Uterus (tissue), 4 donors: ENCODE measurements at regions of chr1 and their contacts with region 1.

Region 1: GRCh38 chr1:39189592-39190041 is 14.9 kb upstream of the MACF1 start:
- DNase-seq: no peak
- H3K4me3 ChIP-seq: no peak overlapping the region
- H3K27ac ChIP-seq: peak overlapping the region; percentile 25 to 45
- H3K4me1 ChIP-seq: peaks cover 0 to 3% of the 10 kb centered on the region in 2 donors
- H3K27me3 ChIP-seq: no peaks in the 10 kb centered on the region
- CTCF ChIP-seq: no peak
- POLR2A ChIP-seq: no peak

Region 2: GRCh38 chr1:38953433-38953860 is 236.2 kb before region 1 on chr1:
- intact Hi-C with region 1: no loop called
- DNase-seq: no peak
- H3K4me3 ChIP-seq: no peak overlapping the region
- H3K27ac ChIP-seq: no peak overlapping the region
- H3K4me1 ChIP-seq: no peaks in the 10 kb centered on the region
- H3K27me3 ChIP-seq: no peaks in the 10 kb centered on the region
- CTCF ChIP-seq: no peak
- POLR2A ChIP-seq: no peak

Region 3: GRCh38 chr1:39105061-39105840 is 84.4 kb before region 1 on chr1:
- intact Hi-C with region 1: loop called (anchors 5 kb)
- DNase-seq: peak; percentile 71 to 74
- H3K4me3 ChIP-seq: peak overlapping the region; percentile 54 to 80
- H3K27ac ChIP-seq: peak overlapping the region; percentile 94 to 95
- H3K4me1 ChIP-seq: peaks cover 8 to 9% of the 10 kb centered on the region in 2 donors
- H3K27me3 ChIP-seq: no peaks in the 10 kb centered on the region
- CTCF ChIP-seq: peak in 1 of 4 experiments; percentile 2
- POLR2A ChIP-seq: peak; percentile 20 to 81

Region 4: DNA sequence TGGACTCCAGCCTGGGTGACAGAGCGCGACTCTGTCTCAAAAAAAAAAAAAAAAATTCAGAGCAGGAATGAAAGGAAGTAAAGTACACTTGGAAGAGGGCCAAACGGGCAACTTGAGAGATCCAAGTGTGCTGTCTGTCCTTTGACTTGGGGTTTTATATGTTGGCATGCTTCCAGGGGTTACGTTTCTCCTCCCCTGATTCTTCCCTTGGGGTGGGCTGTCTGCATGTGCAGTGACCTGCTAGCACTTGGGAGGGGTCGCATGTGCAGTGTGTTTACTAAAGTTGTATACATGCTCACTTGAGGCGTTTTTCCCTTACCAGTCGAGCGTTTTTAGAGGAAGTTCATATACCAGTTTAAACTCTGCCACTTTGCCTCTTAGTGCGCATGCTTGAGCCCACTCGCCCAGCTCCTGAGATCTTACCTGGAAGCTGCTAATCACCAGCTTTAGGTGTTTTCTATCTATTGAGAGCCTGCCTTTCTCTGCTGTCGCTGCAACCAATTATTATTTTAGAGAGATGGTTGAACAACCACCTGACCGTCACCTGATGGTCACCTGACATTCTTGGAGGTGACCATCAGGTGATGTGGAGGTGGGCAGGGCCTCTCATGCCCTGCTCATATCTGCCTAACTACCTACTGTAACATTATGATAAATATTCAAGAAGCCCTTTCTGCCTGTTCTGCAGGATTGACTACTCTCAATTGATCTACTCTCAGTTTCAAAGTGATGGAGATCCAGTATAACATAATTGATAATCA is 155.0 kb after region 1 on chr1:
- intact Hi-C with region 1: no loop called
- DNase-seq: no peak
- H3K4me3 ChIP-seq: no peak overlapping the region
- H3K27ac ChIP-seq: no peak overlapping the region
- H3K4me1 ChIP-seq: no peaks in the 10 kb centered on the region
- H3K27me3 ChIP-seq: no peaks in the 10 kb centered on the region
- CTCF ChIP-seq: no peak
- POLR2A ChIP-seq: no peak